WTC11 (cell line): ENCODE measurements at regions of chr1 and their contacts with region 1.

Region 1: DNA sequence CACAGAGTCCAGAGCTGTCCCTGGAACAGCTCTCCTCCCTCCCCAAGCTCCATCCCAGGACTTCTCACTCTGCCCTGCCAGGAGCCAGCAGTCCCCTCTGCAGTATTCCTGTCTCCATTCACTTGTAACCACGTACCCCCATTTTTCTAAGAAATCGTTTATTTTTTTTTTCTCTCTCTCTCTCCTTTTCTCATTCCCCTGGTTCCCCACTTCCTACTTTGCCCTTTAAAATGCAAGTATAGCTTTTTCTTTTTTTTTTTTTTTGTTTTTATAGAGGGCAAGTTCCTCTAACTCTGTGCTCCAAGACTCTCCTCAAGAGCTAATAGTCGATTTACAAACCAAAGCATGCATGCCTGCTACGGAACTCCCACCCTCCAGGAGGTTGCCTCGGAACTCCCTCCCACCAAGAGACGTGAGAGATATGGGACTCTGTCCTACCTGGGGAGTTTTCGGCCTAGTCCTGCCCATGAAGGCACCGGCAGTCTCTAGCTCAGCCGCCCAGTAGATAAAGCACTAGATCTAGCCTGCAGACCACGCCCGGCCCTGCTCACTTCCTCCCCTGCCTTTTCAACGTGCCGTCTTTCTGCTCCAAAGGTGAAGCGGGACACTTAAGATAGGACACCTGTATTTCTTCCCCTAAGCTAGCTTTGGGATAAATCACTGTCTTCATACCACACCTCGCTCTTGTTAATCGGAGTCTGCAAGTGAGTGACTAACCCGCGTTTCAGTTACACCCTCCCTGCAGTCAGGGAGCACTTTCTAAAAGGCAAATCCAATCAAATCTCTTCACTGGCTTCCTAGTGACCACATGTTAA is 27.7 kb downstream of the TNFRSF9 start:
- DNase-seq: no peak
- ATAC-seq: peak; percentile 57
- H3K4me3 Mint-ChIP-seq: peak overlapping the region; percentile 11
- H3K27ac Mint-ChIP-seq: no peak overlapping the region
- H3K4me1 Mint-ChIP-seq: peaks cover 24% of the 10 kb centered on the region
- H3K27me3 Mint-ChIP-seq: no peaks in the 10 kb centered on the region; the same call in 1 of the 2 replicates
- CTCF ChIP-seq: no peak

Region 2: GRCh38 chr1:7930645-7931445 is 17.9 kb after region 1 on chr1:
- CTCF ChIA-PET with region 1: no interaction called
- POLR2A ChIA-PET with region 1: no interaction called
- DNase-seq: no peak
- ATAC-seq: no peak
- H3K4me3 Mint-ChIP-seq: no peak overlapping the region
- H3K27ac Mint-ChIP-seq: no peak overlapping the region
- H3K4me1 Mint-ChIP-seq: no peaks in the 10 kb centered on the region
- H3K27me3 Mint-ChIP-seq: peaks cover 3% of the 10 kb centered on the region; the same call in 1 of the 2 replicates
- CTCF ChIP-seq: no peak

Region 3: DNA sequence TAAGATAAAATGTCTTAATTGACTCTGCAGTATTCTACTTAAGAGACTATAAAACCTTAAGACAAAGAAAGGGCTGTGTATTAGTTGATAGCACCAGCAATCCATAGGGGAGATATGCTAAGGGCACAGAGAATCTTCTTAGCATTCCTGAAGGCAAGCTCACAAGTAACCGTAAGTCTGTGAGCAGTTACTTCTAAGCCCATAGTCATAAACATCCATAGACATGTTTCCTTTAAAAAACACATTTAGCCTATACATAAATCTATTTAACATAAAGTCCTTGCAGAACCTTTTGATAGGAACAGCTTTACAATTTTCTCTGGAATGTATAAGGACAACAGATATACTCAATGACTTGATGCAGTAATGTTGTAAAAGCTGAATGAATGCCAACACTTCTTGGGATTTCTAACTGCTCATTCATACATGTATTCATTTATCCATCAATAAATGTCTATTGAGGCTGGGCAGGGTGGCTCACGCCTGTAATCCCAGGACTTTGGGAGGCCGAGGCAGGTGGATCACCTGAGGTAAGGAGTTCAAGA is 119.5 kb after region 1 on chr1:
- CTCF ChIA-PET with region 1: no interaction called
- POLR2A ChIA-PET with region 1: interaction called, 10 read pairs
- DNase-seq: no peak
- ATAC-seq: no peak
- H3K4me3 Mint-ChIP-seq: no peak overlapping the region
- H3K27ac Mint-ChIP-seq: no peak overlapping the region
- H3K4me1 Mint-ChIP-seq: peaks cover 17% of the 10 kb centered on the region
- H3K27me3 Mint-ChIP-seq: no peaks in the 10 kb centered on the region
- CTCF ChIP-seq: no peak